Activated CD8-positive, alpha-beta memory T cell treated with anti-CD3 and anti-CD28 coated beads, Interleukin-2, amount 10 ng/mL, durations not matched to agents 7 days and 5 days (primary cell): ENCODE measurements at regions of chr1 and their contacts with region 1.

Region 1: GRCh38 chr1:111720274-111720976 is 18.8 kb downstream of the INKA2 start:
- DNase-seq: peak; percentile 37
- ATAC-seq: no peak
- H3K4me3 Mint-ChIP-seq: no peak overlapping the region
- H3K27ac Mint-ChIP-seq: no peak overlapping the region
- H3K4me1 Mint-ChIP-seq: peaks cover 7% of the 10 kb centered on the region
- H3K27me3 Mint-ChIP-seq: no peaks in the 10 kb centered on the region

Region 2: GRCh38 chr1:111739194-111739924 is 18.9 kb after region 1 on chr1 and contains the start of gene INKA2:
- CTCF ChIA-PET with region 1: interaction called, 50 read pairs
- DNase-seq: peak; percentile 92
- ATAC-seq: peak; percentile 86
- H3K4me3 Mint-ChIP-seq: peak within 1 kb of the TSS; percentile 82
- H3K27ac Mint-ChIP-seq: peak within 1 kb of the TSS; percentile 70
- H3K4me1 Mint-ChIP-seq: peaks cover 19% of the 10 kb centered on the region
- H3K27me3 Mint-ChIP-seq: peaks cover 45% of the 10 kb centered on the region
- total RNA-seq, gene INKA2: 1.7 to 1.9 TPM

Region 3: GRCh38 chr1:111747282-111747734 is 26.9 kb after region 1 on chr1:
- CTCF ChIA-PET with region 1: interaction called, 16 read pairs
- DNase-seq: peak; percentile 84
- ATAC-seq: peak; percentile 91
- H3K4me3 Mint-ChIP-seq: no peak overlapping the region
- H3K27ac Mint-ChIP-seq: no peak overlapping the region
- H3K4me1 Mint-ChIP-seq: peaks cover 10% of the 10 kb centered on the region
- H3K27me3 Mint-ChIP-seq: peaks cover 8% of the 10 kb centered on the region

Region 4: DNA sequence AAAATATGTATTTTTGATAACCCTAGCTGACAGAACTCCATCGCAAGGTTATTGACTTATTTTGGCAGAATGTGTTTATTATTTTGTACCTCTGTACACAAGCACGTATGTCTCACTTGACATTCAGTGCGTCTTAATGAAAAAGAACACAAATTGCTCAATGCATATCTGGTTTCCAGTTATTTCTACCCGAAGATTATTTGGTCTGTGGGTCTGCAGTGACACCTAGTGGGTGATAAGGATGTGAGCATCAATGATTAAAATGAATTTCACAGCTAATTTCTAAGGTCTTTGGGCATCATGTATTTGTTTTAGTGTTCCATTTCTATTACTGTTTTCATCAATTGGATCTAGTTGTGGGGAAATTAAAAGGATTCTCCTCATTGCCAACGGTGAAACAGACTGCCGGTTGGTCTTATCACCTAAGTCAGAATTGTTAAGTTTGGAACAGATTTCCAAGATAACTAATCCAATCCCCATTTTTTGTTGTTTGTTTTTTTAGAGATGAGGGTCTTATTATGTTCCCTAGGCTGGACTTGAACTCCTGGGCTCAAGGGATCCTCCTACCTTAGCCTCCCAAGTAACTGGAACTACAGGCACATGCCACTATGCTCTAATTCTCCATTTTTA is 49.2 kb after region 1 on chr1:
- CTCF ChIA-PET with region 1: interaction called, 14 read pairs
- DNase-seq: peak; percentile 64
- ATAC-seq: peak; percentile 58
- H3K4me3 Mint-ChIP-seq: no peak overlapping the region
- H3K27ac Mint-ChIP-seq: no peak overlapping the region
- H3K4me1 Mint-ChIP-seq: peaks cover 5% of the 10 kb centered on the region
- H3K27me3 Mint-ChIP-seq: no peaks in the 10 kb centered on the region